Sciatic nerve (tissue), 2 donors: ENCODE measurements at regions of chr5 and their contacts with region 1.

Region 1: DNA sequence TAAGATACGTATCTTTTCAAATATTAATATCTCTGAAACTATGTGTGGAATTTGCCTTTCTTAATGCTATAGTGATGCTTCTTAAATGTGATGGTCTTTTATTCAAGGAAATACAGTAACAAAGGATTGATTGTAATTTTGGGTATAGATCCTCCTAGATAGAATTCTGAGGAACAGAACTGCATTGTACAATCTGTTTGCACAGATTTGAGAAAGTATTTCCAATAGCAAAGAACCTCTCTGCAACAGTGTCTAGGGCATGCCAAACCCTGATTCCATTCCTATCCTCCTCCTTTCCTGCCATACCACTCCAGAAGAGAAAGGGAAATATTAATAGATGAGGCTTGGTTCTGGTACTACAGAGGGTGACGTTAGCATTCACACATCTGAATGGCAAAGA is 10.4 kb downstream of the SMIM15 start:
- DNase-seq: no peak
- ATAC-seq: no peak

Region 2: GRCh38 chr5:62720031-62720441 is 1568.1 kb after region 1 on chr5:
- intact Hi-C with region 1: loop called (anchors 5 kb)
- DNase-seq: no peak
- ATAC-seq: peak; percentile 59